ENCODE measurements at regions of chr16 and their contacts with region 1.

Region 1: GRCh38 chr16:47141773-47142485 is 1.8 kb downstream of the NETO2 start:
- DNase-seq: peak; percentile 74 to 86 (median 85)
- ATAC-seq: peak; percentile 91 to 94
- H3K4me3 ChIP-seq: peak overlapping the region; percentile 77
- H3K27ac ChIP-seq: no peak overlapping the region
- H3K4me1 ChIP-seq: no peaks in the 10 kb centered on the region
- H3K27me3 ChIP-seq: no peaks in the 10 kb centered on the region

Region 2: GRCh38 chr16:47037746-47038458 is 104.0 kb before region 1 on chr16:
- intact Hi-C with region 1: loop called in 1 of 4 experiments (anchors 10 kb)
- DNase-seq: peak; percentile 90 to 96 (median 96)
- ATAC-seq: peak; percentile 98 to 99
- H3K4me3 ChIP-seq: peak overlapping the region; percentile 88
- H3K27ac ChIP-seq: no peak overlapping the region
- H3K4me1 ChIP-seq: no peaks in the 10 kb centered on the region
- H3K27me3 ChIP-seq: no peaks in the 10 kb centered on the region

Region 3: GRCh38 chr16:47258874-47259461 is 117.0 kb after region 1 on chr16:
- intact Hi-C with region 1: no loop called
- DNase-seq: no peak
- ATAC-seq: no peak
- H3K4me3 ChIP-seq: no peak overlapping the region
- H3K27ac ChIP-seq: no peak overlapping the region
- H3K4me1 ChIP-seq: no peaks in the 10 kb centered on the region
- H3K27me3 ChIP-seq: no peaks in the 10 kb centered on the region

Region 4: GRCh38 chr16:48054881-48055601 is 913.1 kb after region 1 on chr16:
- intact Hi-C with region 1: loop called in 1 of 4 experiments (anchors 10 kb)
- DNase-seq: peak; percentile 28 to 56 (median 48)
- ATAC-seq: peak; percentile 74 to 80
- H3K4me3 ChIP-seq: no peak overlapping the region
- H3K27ac ChIP-seq: no peak overlapping the region
- H3K4me1 ChIP-seq: peaks cover 3% of the 10 kb centered on the region
- H3K27me3 ChIP-seq: no peaks in the 10 kb centered on the region

Region 5: DNA sequence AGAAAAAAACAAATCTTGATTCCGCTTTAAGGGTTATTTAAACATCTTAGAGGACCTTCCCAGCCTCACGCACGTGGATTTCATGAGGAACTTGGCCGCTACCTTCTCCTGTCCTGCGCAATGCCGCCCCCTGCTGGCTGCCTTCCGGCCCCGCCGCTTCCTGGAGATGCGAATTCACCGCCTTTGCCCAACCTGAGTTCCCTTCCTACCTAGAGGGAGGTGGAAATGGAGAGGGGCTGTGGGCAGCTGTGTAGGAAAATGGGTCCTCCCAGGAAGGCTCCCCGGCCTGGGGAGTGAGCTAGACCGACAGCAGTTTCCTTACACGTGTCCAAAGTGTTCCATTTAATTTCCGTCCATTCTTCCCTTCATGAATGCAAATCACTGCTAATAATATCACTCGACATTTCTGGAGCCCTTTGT is 1014.9 kb after region 1 on chr16:
- intact Hi-C with region 1: loop called (anchors 2 to 10 kb)
- DNase-seq: peak; percentile 81 to 93 (median 93)
- ATAC-seq: peak; percentile 78 to 86
- H3K4me3 ChIP-seq: no peak overlapping the region
- H3K27ac ChIP-seq: no peak overlapping the region
- H3K4me1 ChIP-seq: no peaks in the 10 kb centered on the region
- H3K27me3 ChIP-seq: no peaks in the 10 kb centered on the region

Region 6: DNA sequence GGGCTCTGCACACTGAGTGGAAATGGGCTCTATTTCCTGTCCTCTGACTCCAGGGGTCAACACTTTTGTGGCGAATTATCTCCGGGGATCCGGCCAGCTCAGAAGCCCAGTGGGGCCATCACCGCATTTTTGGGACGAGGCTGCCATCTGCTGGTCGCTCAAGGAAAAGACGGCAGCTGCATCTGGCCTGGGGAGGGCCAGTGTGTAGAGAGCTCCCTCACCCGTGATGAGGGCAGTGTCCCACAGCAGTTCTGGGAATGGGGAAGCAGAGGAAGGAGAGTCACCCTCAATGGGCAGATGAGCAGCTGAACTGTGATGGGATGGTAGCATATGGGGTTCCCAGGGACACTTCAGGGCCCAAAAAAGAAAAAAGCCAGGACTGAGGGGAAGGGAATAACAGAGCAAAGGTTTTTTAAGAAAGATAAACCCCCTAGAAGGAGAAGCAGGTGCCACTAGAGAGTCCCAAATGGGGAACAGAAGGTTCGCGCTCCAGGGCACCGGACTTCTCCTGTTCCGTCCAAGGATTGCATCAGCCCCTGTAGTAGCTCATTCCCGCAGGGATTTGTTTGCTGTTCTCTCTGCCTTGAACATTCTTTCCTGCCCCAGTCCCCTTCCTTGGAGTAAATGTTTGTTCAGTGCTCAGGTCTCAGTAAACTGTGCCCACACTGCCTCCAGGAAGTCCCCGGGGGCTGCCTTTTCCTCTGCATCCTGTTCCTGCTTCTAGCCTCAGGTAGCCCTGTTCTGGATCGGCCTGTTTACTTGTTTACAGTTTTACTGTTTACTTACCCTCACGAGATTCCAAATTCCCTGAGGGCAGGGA is 1023.2 kb after region 1 on chr16:
- intact Hi-C with region 1: loop called in 1 of 4 experiments (anchors 5 kb)
- DNase-seq: peak; percentile 67 to 89 (median 82)
- ATAC-seq: peak; percentile 95
- H3K4me3 ChIP-seq: no peak overlapping the region
- H3K27ac ChIP-seq: no peak overlapping the region
- H3K4me1 ChIP-seq: peaks cover 2% of the 10 kb centered on the region
- H3K27me3 ChIP-seq: no peaks in the 10 kb centered on the region

Measured in right cardiac atrium (tissue), 5 donors.